ENCODE measurements at regions of chr10 and their contacts with region 1.

Region 1: GRCh38 chr10:29881336-29881771 is 178.0 kb downstream of the JCAD start:
- DNase-seq: no peak
- H3K4me3 ChIP-seq: no peak overlapping the region
- H3K27ac ChIP-seq: no peak overlapping the region
- H3K4me1 ChIP-seq: no peaks in the 10 kb centered on the region
- H3K27me3 ChIP-seq: no peaks in the 10 kb centered on the region
- CTCF ChIP-seq: no peak

Region 2: GRCh38 chr10:29033311-29033940 is 847.9 kb before region 1 on chr10:
- CTCF ChIA-PET with region 1: no interaction called
- POLR2A ChIA-PET with region 1: no interaction called
- intact Hi-C with region 1: no loop called
- DNase-seq: no peak
- H3K4me3 ChIP-seq: no peak overlapping the region
- H3K27ac ChIP-seq: no peak overlapping the region
- H3K4me1 ChIP-seq: no peaks in the 10 kb centered on the region
- H3K27me3 ChIP-seq: no peaks in the 10 kb centered on the region
- CTCF ChIP-seq: no peak

Region 3: GRCh38 chr10:30127120-30127541 is 245.8 kb after region 1 on chr10:
- CTCF ChIA-PET with region 1: no interaction called
- POLR2A ChIA-PET with region 1: interaction called, 17 read pairs
- intact Hi-C with region 1: no loop called
- DNase-seq: no peak
- H3K4me3 ChIP-seq: no peak overlapping the region
- H3K27ac ChIP-seq: no peak overlapping the region
- H3K4me1 ChIP-seq: peaks cover 12% of the 10 kb centered on the region
- H3K27me3 ChIP-seq: no peaks in the 10 kb centered on the region
- CTCF ChIP-seq: no peak

Region 4: DNA sequence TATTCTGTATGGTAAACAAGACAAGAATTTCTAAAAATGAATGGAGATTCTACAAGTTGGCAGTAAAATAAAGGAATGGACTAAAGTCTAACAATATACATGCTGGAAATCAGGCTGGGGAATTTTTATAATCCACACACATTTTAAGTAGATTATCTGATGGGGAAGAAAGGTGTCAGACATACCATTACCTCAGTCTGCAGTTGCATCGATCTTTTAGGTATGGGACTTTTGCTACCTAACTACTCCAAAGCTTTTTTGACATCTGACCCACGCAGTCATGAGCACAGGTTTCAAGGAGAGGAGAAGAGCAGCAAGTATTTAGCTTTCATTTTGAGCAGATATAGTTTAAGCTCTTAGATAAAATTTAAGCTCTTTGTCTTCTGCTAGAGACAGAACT is 1037.3 kb after region 1 on chr10:
- CTCF ChIA-PET with region 1: no interaction called
- POLR2A ChIA-PET with region 1: interaction called, 11 read pairs
- intact Hi-C with region 1: no loop called
- DNase-seq: no peak
- H3K4me3 ChIP-seq: no peak overlapping the region
- H3K27ac ChIP-seq: no peak overlapping the region
- H3K4me1 ChIP-seq: no peaks in the 10 kb centered on the region
- H3K27me3 ChIP-seq: no peaks in the 10 kb centered on the region
- CTCF ChIP-seq: no peak

Measured in A673 (cell line).